Cardiac septum (tissue), 1 donor: ENCODE measurements at regions of chr10 and their contacts with region 1.

Region 1: GRCh38 chr10:130136226-130137089 is at the start of gene GLRX3:
- DNase-seq: peak; percentile 92
- total RNA-seq, gene GLRX3: 67.5 TPM

Region 2: GRCh38 chr10:129023082-129023481 is 1113.4 kb before region 1 on chr10:
- intact Hi-C with region 1: loop called (anchors 10 kb)
- DNase-seq: no peak

Region 3: DNA sequence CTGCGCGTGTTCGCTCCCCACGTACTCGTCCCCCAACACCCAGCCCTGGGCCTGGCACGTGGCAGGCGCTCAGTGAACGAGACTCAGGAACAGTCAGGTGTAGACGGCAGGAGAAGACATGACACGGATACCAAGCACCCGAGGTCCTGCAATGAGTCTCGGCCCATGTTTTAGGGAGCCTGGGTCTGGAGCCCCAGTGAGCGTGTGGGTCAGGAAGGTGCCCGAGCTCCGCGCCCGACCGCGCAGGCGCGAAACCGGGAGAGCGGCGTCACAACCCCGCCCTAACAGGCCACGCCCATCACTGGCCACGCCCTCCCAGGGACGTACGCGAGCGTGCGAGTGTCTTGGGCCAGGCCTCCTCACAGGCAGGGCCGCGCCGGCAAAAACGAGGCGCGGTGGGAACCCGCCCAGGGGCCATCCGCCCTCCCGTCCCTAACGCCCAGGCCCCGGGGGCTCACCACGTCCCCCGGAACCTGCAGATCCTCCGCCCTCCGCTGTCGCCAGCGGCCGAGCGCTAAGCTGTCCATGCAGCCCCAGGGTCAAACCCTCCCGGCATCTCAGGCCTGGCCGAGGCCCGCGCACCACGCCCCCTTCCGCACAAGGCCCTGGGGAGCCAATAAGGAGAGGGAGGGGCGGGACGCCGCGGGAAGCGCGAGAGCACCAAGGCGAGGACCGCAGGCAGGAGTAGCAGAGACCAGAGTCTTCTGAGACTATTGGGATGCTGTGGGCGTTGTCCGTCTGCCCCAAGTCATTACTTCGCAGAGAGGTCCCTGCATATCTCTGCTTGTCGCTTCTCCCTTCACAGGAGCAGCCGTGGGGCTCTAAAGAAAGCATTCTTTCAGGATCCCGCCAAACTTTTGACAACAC is 26.0 kb before region 1 on chr10 and contains the start of gene C10orf143:
- intact Hi-C with region 1: loop called (anchors 1 kb)
- DNase-seq: peak; percentile 99
- total RNA-seq, gene C10orf143: 2.6 TPM

Region 4: GRCh38 chr10:130190055-130190736 is 53.7 kb after region 1 on chr10:
- intact Hi-C with region 1: no loop called
- DNase-seq: peak; percentile 94

Region 5: GRCh38 chr10:130263289-130263688 is 126.8 kb after region 1 on chr10:
- intact Hi-C with region 1: no loop called
- DNase-seq: no peak

Region 6: DNA sequence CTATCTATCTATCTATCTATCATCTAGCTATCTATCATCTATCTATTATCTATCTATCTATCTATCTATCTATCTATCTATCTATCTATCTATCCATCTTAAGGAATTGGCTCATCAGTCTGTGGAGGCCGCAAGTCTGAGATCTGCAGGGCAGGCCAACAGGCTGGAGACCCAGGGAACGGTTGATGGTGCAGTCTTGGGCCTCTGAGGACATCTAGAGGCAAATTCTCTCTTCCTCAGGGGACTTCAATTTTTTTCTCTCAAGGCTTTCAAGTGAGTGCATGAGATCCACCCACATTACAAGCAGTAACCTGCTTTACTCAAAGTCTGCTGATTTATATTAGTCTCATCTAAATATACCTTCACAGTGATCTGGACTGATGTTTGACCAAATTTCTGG is 196.7 kb after region 1 on chr10:
- intact Hi-C with region 1: no loop called
- DNase-seq: no peak